Psoas muscle (tissue), 8 donors: ENCODE measurements at regions of chr7 and their contacts with region 1.

Region 1: DNA sequence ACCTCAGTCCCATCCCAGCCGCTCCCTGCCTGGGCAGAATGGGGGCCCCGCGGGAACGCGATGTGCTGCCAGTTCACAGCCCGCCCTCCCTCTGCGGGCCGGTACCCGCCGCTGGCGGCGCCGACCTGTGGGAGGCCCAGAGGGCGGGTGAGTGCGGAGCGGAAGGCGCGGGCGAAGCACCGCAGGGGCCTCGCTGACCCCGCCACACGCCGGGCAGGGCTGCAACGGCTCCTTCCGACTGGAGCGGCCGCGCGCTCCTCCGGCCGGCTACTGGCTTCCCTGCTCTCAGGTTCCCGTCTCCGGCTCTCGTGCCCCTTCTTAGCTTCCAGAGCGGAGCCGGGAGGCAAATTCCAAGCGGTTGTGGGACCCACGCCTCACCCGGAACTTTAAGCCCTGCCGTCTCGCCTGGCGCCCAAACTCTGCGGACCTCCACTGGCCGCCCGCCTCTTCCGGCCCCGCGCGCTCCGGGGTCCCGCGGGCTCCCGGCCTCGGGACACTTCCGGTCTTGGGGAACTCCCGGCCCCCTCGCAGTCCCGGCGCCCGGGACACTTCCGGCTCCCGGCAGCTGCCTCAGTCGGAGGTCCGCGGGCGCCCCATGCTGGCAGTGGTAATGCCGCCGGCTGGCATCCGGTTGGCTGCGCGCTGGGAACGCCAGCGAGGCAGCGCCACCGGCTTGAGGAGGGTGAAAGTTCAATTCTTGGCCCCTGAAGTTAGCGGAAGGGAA is at the start of gene CYREN:
- DNase-seq: peak; percentile 96 to 98
- ATAC-seq: peak; percentile 82 to 91 (median 84)
- H3K4me3 ChIP-seq: peak within 1 kb of the TSS; percentile 97
- H3K27ac ChIP-seq: peak within 1 kb of the TSS; percentile 100
- H3K4me1 ChIP-seq: peaks cover 35% of the 10 kb centered on the region
- H3K27me3 ChIP-seq: no peaks in the 10 kb centered on the region
- CTCF ChIP-seq: peak; percentile 52
- total RNA-seq, gene CYREN: 20.6 to 29.4 (median 25.3) TPM

Region 2: GRCh38 chr7:134533288-134533771 is 637.1 kb before region 1 on chr7:
- intact Hi-C with region 1: loop called in 1 of 2 experiments (anchors 10 kb)
- DNase-seq: peak in 1 of 2 donors; percentile 79
- ATAC-seq: peak; percentile 83 to 94 (median 89)
- H3K4me3 ChIP-seq: no peak overlapping the region
- H3K27ac ChIP-seq: peak overlapping the region; percentile 88
- H3K4me1 ChIP-seq: peaks cover 49% of the 10 kb centered on the region
- H3K27me3 ChIP-seq: no peaks in the 10 kb centered on the region
- CTCF ChIP-seq: no peak

Region 3: DNA sequence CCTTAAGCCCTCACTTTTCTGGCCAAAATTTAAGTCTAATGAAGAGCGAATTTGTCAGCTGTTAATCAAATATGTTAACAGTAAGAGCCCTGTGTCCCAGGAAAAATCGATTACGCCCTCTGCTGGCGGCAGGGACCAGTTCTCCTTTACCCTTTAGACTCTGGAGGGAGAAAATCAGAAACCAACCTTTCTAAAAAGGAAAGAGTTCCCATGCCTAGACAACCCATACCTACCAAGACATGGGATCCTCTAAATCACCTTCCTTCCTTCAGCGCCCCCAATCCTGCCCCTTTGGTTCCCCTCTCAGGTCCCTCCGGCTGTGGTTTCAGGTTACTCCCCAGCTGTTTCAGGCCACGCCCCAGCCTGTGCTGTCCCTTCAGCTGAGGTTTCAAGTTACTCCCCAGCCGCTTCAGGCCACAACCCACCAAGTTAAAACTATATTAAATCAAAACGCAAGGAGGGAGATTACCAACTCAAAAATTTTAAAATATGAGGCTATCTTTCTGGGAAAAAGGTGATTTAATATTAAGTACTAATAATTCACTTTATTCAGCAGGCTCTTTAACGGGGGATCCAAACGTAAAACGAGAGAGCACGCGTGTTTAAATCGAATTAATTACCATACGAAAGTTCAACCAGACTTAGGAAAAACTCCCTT is 622.9 kb before region 1 on chr7:
- intact Hi-C with region 1: loop called in 1 of 2 experiments (anchors 10 kb)
- DNase-seq: peak; percentile 75 to 88
- ATAC-seq: peak; percentile 80 to 83 (median 81)
- H3K4me3 ChIP-seq: peak overlapping the region; percentile 73
- H3K27ac ChIP-seq: peak overlapping the region; percentile 91
- H3K4me1 ChIP-seq: peaks cover 27% of the 10 kb centered on the region
- H3K27me3 ChIP-seq: no peaks in the 10 kb centered on the region
- CTCF ChIP-seq: peak; percentile 89

Region 4: DNA sequence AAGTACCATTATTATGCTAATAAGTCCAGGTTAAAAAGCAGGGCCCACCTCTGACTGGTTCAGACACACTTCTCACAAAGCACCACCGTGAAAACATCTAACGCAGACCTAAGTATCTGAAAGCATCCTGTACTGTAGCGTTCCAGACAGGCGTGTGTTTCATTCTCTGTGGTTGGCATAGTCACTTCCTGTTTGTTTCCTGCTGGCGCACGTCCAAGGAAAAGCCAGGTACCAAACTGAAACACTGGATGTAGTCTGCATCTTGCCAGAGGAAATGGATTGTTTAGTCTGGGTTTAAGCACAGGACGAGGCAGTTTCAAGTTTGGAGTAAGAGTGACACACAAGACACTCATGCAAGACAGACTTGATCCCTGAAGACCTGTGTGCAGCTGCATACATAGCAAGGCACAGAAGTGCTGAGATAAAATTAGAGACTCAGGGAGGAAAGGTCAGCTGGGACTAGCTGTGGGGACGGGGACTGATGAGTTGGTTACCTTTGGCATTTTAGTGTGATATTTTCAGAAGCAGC is 500.5 kb before region 1 on chr7:
- intact Hi-C with region 1: loop called in 1 of 2 experiments (anchors 10 kb)
- DNase-seq: peak; percentile 37 to 68
- ATAC-seq: peak; percentile 64 to 96 (median 88)
- H3K4me3 ChIP-seq: peak overlapping the region; percentile 5
- H3K27ac ChIP-seq: peak overlapping the region; percentile 63
- H3K4me1 ChIP-seq: peaks cover 27% of the 10 kb centered on the region
- H3K27me3 ChIP-seq: no peaks in the 10 kb centered on the region
- CTCF ChIP-seq: no peak

Region 5: DNA sequence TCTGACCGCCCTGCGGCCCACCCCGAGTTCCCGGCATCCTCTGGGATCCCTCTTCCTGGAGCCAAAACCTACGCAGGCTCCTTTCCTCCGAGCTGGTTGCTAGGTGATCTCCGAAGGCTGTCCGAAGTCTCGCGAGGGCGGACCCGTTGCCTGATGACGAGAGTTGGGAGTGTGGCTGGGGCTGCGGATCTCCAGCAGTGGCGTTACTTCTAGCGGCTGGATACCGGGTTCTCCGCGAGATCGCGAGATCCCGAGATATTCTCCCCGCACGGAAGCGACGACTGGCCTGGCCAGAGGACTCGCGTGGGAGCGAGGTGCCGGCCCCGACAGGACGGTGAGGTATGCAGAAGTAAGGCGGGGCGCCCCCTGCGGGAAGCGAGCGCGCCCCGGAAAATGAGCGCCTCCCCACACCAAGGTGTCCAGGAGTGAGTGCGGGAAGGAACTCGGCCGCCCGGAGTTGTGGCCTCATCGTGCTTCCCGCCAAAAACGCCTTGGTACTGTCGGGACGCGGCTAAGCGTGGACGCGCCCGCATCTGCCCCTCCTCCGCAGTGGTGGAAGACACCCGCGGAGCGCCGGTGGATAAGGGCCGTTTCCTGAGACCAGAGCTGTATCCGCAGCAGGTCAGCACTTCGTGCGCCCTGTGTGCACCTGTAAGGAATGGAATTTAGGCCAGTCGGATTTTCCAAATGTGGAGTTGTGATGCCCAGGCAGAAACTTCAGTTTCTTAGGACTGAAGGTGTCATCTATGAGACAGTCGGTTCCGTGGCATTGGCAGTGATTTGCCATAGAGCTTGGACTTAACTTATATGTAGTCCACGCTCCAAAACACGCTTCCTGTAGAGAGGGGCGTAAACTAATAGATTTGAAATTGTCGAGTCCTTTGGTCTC is 183.8 kb before region 1 on chr7 and contains the start of gene AGBL3:
- intact Hi-C with region 1: loop called (anchors 2 to 10 kb)
- DNase-seq: peak; percentile 97 to 98
- ATAC-seq: peak; percentile 98 to 99 (median 99)
- H3K4me3 ChIP-seq: peak within 1 kb of the TSS; percentile 78
- H3K27ac ChIP-seq: peak within 1 kb of the TSS; percentile 88
- H3K4me1 ChIP-seq: peaks cover 9% of the 10 kb centered on the region
- H3K27me3 ChIP-seq: no peaks in the 10 kb centered on the region
- CTCF ChIP-seq: peak; percentile 57
- total RNA-seq, gene AGBL3: 1.1 to 3.5 (median 2.3) TPM

Region 6: DNA sequence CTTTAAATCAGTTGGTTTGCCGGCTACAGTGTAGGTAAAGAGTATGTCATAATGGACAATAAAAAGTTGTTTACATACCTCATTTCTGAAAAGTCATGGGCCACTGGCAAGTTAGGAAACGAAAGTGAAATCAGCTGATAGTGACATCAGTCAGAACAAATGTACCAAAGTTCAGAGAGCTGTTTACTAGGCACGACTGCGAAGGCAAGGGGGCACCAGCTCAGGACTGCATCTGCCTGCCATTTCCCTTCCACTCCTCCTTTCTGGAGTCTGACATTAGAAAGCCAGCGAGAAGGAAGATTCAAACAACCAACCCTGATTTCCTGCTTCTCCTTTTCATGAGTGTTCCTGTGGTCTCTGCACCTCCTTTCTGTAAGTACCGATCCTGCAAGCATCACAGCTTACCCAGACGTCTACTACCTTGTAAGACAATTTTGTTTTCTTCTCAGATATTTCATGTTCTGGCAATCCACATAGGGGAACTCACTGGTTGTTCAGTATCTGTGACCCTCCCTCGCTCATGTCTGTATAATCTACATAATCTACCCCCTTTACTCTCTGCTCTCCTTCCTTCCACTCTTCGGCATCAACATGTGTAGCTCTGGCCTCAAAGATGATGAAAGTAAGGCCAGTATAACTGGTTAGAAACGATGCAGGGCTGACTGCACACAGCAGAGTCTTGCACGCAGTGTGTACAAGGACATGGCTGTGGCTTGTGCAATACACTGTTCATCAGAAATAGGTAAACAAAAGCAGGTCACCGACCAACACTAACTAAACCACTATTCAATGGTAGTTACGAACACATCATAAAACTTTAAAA is 22.3 kb before region 1 on chr7 and contains the start of gene TMEM140:
- intact Hi-C with region 1: loop called (anchors 2 kb)
- DNase-seq: peak in 1 of 2 donors; percentile 77
- ATAC-seq: peak; percentile 73 to 84 (median 79)
- H3K4me3 ChIP-seq: peak within 1 kb of the TSS; percentile 78
- H3K27ac ChIP-seq: peak within 1 kb of the TSS; percentile 97
- H3K4me1 ChIP-seq: peaks cover 40% of the 10 kb centered on the region
- H3K27me3 ChIP-seq: no peaks in the 10 kb centered on the region
- CTCF ChIP-seq: no peak
- total RNA-seq, gene TMEM140: 67.0 to 106 (median 74.0) TPM